ENCODE measurements at regions of chr20 and their contacts with region 1.

Region 1: GRCh38 chr20:32465092-32465900 is 107.2 kb downstream of the ASXL1 start:
- DNase-seq: peak; percentile 77 to 91 (median 86)
- ATAC-seq: peak; percentile 55
- H3K4me3 ChIP-seq: no peak overlapping the region
- H3K27ac ChIP-seq: peak overlapping the region; percentile 84 to 94 (median 90)
- H3K4me1 ChIP-seq: peaks cover 62% of the 10 kb centered on the region
- H3K27me3 ChIP-seq: no peaks in the 10 kb centered on the region
- CTCF ChIP-seq: no peak
- POLR2A ChIP-seq: peak in 2 of 3 donors; percentile 32 to 34

Region 2: DNA sequence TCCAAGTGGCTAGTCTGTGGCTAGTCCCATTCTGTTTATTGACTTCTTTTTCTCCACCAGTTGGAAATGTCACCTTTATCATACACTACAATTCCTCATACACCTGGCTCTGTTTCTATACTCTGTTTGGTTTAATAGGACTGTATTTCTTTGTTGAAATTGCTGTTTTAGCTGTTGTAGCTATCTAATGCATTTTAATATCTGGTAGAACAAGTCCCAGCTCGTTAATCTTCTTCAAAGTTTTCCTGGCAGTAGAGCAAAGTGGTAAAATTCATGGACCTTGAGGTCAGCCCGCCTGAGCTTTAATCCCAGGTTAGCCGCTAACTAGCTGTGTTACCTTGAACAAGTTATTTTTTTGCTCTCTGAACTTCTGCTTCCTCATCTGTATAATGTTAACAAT is 117.1 kb before region 1 on chr20:
- intact Hi-C with region 1: no loop called
- DNase-seq: no peak
- ATAC-seq: peak; percentile 65
- H3K4me3 ChIP-seq: no peak overlapping the region
- H3K27ac ChIP-seq: peak overlapping the region in 3 of 4 donors; percentile 11 to 47 (median 35)
- H3K4me1 ChIP-seq: peaks cover 28% of the 10 kb centered on the region
- H3K27me3 ChIP-seq: no peaks in the 10 kb centered on the region
- CTCF ChIP-seq: no peak
- POLR2A ChIP-seq: no peak

Region 3: DNA sequence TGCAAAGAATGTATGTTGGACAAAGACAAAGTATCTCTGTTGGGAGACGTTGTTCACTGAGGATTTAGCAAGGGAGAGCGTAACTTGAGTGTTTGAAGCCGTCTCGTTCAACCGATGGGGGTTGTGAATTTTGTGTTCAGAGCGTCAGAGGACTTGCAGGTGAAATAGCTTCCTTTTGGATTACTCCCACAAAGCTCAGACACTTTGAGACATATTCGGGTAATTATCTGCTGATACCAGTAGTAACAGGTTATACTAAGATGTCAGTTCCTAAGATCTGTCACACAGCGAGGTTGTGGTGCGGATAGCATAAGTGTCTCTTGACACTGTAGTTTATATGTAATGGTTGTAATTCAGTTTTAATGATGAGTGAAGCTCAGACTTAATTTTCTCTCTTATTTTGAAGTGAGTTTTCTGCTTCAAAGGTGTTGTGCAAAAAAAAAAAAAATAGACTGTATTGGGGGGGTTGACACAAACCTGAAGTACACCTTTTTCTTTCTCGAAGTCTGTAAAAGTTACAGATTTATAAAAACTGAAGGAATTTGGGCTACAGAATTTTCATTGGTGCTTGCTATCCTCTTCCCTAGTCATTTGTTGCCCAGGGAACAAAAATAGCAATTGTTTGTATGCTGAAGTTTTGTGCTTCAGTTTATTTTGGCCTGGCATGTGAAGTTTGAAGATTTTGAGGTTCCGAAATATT is 105.5 kb before region 1 on chr20:
- intact Hi-C with region 1: loop called (anchors 10 kb)
- DNase-seq: no peak
- ATAC-seq: no peak
- H3K4me3 ChIP-seq: peak overlapping the region; percentile 73 to 89
- H3K27ac ChIP-seq: peak overlapping the region; percentile 96 to 98 (median 97)
- H3K4me1 ChIP-seq: peaks cover 76% of the 10 kb centered on the region
- H3K27me3 ChIP-seq: no peaks in the 10 kb centered on the region
- CTCF ChIP-seq: no peak
- POLR2A ChIP-seq: no peak

Measured in body of pancreas (tissue), 4 donors.